Naive thymus-derived CD4-positive, alpha-beta T cell (primary cell): ENCODE measurements at regions of chr5 and their contacts with region 1.

Region 1: GRCh38 chr5:115180165-115180709 is 10.5 kb upstream of the TRIM36 start:
- DNase-seq: peak in 5 of 9 donors; percentile 4 to 44 (median 22)
- ATAC-seq: peak; percentile 68
- H3K4me3 ChIP-seq: peak overlapping the region; percentile 42
- H3K4me3 Mint-ChIP-seq: peak overlapping the region; percentile 72 to 93 (median 83)
- H3K27ac ChIP-seq: no peak overlapping the region
- H3K27ac Mint-ChIP-seq: no peak overlapping the region
- H3K4me1 ChIP-seq: peaks cover 10 to 16% of the 10 kb centered on the region in 2 donors
- H3K4me1 Mint-ChIP-seq: peaks cover 5 to 20% (median 6%) of the 10 kb centered on the region in 7 donors
- H3K27me3 ChIP-seq: peaks cover 17 to 21% of the 10 kb centered on the region in 2 donors
- H3K27me3 Mint-ChIP-seq: peaks cover 81 to 89% (median 86%) of the 10 kb centered on the region in 5 donors

Region 2: DNA sequence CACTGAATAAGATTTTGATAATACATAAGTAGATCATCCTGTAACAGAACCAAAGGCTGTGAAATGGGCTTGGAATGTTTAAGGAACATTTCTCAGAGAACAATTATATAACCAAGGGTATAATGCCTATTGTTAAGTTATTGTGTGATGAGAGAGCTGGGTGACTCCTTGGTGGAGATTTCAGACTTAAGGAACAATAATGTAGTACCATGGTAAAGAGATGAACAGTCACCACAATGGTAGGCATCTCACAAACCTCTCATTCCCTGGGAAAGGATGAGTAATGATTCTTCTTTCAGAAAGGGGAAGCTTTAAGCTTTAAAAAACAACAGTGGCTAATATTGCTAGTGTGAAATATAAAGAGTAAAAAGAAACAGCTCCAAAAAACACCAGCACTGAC is 157.9 kb before region 1 on chr5:
- CTCF ChIA-PET with region 1: no interaction called
- POLR2A ChIA-PET with region 1: no interaction called
- intact Hi-C with region 1: no loop called
- DNase-seq: no peak
- ATAC-seq: no peak
- H3K4me3 ChIP-seq: no peak overlapping the region
- H3K4me3 Mint-ChIP-seq: no peak overlapping the region
- H3K27ac ChIP-seq: no peak overlapping the region
- H3K27ac Mint-ChIP-seq: no peak overlapping the region
- H3K4me1 ChIP-seq: no peaks in the 10 kb centered on the region
- H3K4me1 Mint-ChIP-seq: peaks cover 0 to 3% (median 0%) of the 10 kb centered on the region in 7 donors
- H3K27me3 ChIP-seq: peaks cover 0 to 3% of the 10 kb centered on the region in 2 donors
- H3K27me3 Mint-ChIP-seq: peaks cover 0 to 16% (median 4%) of the 10 kb centered on the region in 5 donors

Region 3: GRCh38 chr5:115116001-115116400 is 64.2 kb before region 1 on chr5:
- CTCF ChIA-PET with region 1: no interaction called
- POLR2A ChIA-PET with region 1: no interaction called
- intact Hi-C with region 1: loop called in 1 of 2 experiments (anchors 10 kb)
- DNase-seq: no peak
- ATAC-seq: no peak
- H3K4me3 ChIP-seq: no peak overlapping the region
- H3K4me3 Mint-ChIP-seq: no peak overlapping the region
- H3K27ac ChIP-seq: no peak overlapping the region
- H3K27ac Mint-ChIP-seq: no peak overlapping the region
- H3K4me1 ChIP-seq: no peaks in the 10 kb centered on the region
- H3K4me1 Mint-ChIP-seq: no peaks in the 10 kb centered on the region
- H3K27me3 ChIP-seq: no peaks in the 10 kb centered on the region
- H3K27me3 Mint-ChIP-seq: peaks cover 10 to 51% (median 40%) of the 10 kb centered on the region in 5 donors

Region 4: DNA sequence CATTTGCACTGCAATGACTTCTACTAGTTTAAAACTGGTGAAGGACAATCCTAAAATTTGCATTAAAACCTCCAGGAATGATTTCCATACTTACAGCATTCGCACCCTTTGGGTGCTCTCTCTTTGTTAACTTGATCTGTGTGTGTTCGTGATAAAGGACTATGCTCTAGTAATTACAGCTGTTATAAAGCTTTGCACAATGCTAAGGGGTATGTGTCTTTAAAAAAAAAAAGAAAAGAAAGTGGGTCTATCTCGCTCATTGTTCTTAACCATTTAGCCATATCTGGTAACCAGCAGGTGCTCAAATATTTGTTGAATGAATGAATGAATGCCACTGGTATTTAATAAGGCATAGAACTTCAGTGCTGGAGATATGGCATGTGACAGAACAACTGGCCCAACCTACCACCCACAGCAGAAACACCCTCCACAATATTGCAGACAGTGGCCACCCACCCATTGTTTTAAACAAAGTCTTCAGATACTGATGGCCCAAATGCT is 19.2 kb before region 1 on chr5:
- CTCF ChIA-PET with region 1: no interaction called
- POLR2A ChIA-PET with region 1: no interaction called
- intact Hi-C with region 1: no loop called
- DNase-seq: no peak
- ATAC-seq: no peak
- H3K4me3 ChIP-seq: no peak overlapping the region
- H3K4me3 Mint-ChIP-seq: no peak overlapping the region
- H3K27ac ChIP-seq: no peak overlapping the region
- H3K27ac Mint-ChIP-seq: no peak overlapping the region
- H3K4me1 ChIP-seq: no peaks in the 10 kb centered on the region
- H3K4me1 Mint-ChIP-seq: no peaks in the 10 kb centered on the region
- H3K27me3 ChIP-seq: peaks cover 0 to under 1% of the 10 kb centered on the region in 2 donors
- H3K27me3 Mint-ChIP-seq: peaks cover 40 to 70% (median 44%) of the 10 kb centered on the region in 5 donors

Region 5: GRCh38 chr5:115209279-115209678 is 29.0 kb after region 1 on chr5:
- CTCF ChIA-PET with region 1: no interaction called
- POLR2A ChIA-PET with region 1: no interaction called
- intact Hi-C with region 1: loop called in 1 of 2 experiments (anchors 2 kb)
- DNase-seq: peak in 8 of 9 donors; percentile 1 to 45 (median 15)
- ATAC-seq: peak; percentile 97
- H3K4me3 ChIP-seq: no peak overlapping the region
- H3K4me3 Mint-ChIP-seq: peak overlapping the region in 1 of 10 donors; percentile 77
- H3K27ac ChIP-seq: no peak overlapping the region
- H3K27ac Mint-ChIP-seq: peak overlapping the region in 3 of 9 donors; percentile 6 to 74 (median 62)
- H3K4me1 ChIP-seq: no peaks in the 10 kb centered on the region
- H3K4me1 Mint-ChIP-seq: peaks cover 5 to 19% (median 12%) of the 10 kb centered on the region in 7 donors
- H3K27me3 ChIP-seq: no peaks in the 10 kb centered on the region
- H3K27me3 Mint-ChIP-seq: no peaks in the 10 kb centered on the region